ENCODE measurements at regions of chr15 and their contacts with region 1.

Region 1: GRCh38 chr15:60548101-60548500 is 69.2 kb upstream of the ICE2 start:
- DNase-seq: peak in 1 of 2 donors; percentile 68
- ATAC-seq: peak; percentile 11 to 40 (median 33)
- H3K4me3 ChIP-seq: no peak overlapping the region
- H3K4me3 Mint-ChIP-seq: peak overlapping the region; percentile 88
- H3K27ac ChIP-seq: peak overlapping the region; percentile 87
- H3K27ac Mint-ChIP-seq: peak overlapping the region; percentile 93 to 95
- H3K4me1 ChIP-seq: peaks cover 61% of the 10 kb centered on the region
- H3K4me1 Mint-ChIP-seq: peaks cover 95% of the 10 kb centered on the region in 2 donors
- H3K27me3 ChIP-seq: no peaks in the 10 kb centered on the region
- H3K27me3 Mint-ChIP-seq: no peaks in the 10 kb centered on the region
- CTCF ChIP-seq: no peak

Region 2: DNA sequence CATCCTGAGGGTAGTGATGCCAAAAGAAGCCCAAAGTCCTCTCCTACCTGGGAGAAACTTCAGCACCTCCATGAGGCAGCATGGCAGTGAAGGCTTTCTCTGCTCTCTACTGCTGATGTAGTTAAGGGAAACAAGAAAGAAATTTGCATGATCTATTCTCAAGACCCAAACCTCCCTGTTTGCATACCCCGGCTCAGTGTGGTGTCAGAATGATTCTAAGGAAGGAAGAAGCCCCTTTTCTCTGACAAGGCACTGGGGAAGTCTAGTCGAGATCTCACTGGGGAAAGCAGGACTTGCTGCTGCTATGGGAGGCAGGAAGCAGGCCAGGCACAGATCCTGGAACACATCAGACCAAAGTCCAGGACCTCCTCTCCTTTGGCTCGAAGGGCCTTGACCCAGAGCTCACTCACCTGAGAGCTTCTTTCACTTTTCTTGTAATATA is 20.2 kb after region 1 on chr15:
- intact Hi-C with region 1: loop called (anchors 2 kb)
- DNase-seq: peak in 1 of 2 donors; percentile 41
- ATAC-seq: peak in 2 of 3 donors; percentile 6 to 8
- H3K4me3 ChIP-seq: no peak overlapping the region
- H3K4me3 Mint-ChIP-seq: peak overlapping the region; percentile 77
- H3K27ac ChIP-seq: peak overlapping the region; percentile 65
- H3K27ac Mint-ChIP-seq: peak overlapping the region; percentile 78 to 88
- H3K4me1 ChIP-seq: peaks cover 63% of the 10 kb centered on the region
- H3K4me1 Mint-ChIP-seq: peaks cover 91 to 92% of the 10 kb centered on the region in 2 donors
- H3K27me3 ChIP-seq: no peaks in the 10 kb centered on the region
- H3K27me3 Mint-ChIP-seq: no peaks in the 10 kb centered on the region
- CTCF ChIP-seq: no peak

Region 3: DNA sequence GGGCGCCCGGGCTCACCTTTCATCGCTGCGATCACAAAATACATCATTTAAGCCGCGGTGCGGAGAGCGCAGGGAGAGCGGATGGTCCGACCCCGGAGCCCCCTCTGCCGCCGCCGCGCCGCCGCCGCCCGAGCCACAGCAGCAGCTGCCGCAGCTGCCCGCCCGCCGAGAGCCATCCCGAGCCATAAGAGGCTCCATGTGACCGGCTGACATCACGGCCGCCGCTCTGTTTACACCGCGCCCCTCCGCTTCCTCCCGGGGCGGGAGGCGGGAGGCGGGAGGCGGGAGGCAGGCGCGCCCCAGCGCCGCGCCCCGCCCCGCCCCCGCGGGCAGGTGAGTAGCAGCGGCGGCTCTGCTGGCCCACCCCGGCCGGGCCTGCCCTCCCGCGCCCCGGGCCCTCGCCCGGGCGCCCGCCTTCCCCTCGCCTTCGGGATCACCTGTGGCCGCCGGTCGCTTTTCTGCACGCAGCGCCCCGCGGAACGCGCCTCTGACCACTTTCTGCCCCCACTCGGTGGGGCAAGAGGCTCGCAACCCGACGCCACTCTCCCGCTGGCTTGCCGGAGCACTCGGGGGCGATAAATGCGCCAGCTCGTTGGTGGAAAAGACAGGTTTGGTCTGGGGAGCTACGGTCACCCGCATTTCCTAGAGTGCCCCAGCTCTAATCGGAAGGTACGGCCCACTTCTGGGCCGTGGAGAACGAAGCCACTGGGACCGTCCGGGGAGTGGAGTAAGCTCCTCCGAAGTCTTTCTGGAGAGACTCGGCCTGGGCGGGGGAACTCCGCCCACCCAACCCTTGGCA is 44.5 kb after region 1 on chr15:
- intact Hi-C with region 1: no loop called
- DNase-seq: peak; percentile 73 to 92
- ATAC-seq: peak; percentile 81 to 93 (median 87)
- H3K4me3 ChIP-seq: peak overlapping the region; percentile 90
- H3K4me3 Mint-ChIP-seq: peak overlapping the region; percentile 91
- H3K27ac ChIP-seq: peak overlapping the region; percentile 86
- H3K27ac Mint-ChIP-seq: peak overlapping the region; percentile 93
- H3K4me1 ChIP-seq: peaks cover 13% of the 10 kb centered on the region
- H3K4me1 Mint-ChIP-seq: peaks cover 39 to 52% of the 10 kb centered on the region in 2 donors
- H3K27me3 ChIP-seq: no peaks in the 10 kb centered on the region
- H3K27me3 Mint-ChIP-seq: no peaks in the 10 kb centered on the region
- CTCF ChIP-seq: no peak

Region 4: DNA sequence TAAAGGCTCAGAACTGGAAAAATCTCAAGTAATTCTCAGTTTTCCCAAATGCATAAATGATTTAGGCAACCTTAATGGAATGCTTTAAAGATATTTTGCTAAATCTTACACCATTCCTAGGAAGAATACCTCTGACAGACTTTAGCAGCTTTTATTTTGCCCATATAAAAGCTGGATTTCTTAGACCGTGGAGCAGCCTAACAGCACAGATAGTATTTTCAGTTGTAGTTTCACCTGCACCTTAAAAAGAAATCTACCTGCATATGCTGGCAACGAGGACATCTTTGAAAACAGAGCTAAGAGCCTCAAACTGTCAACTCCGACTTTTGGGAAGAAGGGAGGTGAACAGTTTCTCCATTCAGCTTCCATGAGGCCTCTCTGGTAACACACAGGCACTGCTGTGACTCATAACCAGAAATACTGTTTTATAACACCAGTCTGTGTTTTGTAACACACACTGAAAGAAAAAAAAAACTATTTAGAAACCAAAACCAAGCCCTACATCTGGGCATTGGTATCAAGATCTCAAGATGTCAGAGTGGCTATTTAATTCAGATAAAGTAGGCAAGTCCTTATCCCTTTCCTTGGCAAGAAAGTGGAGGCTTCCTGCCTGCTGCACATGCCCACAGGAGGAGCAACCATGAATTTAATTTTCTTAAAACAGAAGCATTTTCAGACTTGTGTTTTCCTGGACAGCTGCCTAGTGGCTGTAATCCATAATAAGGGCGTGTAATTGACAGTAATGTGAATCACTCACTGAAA is 112.4 kb after region 1 on chr15:
- intact Hi-C with region 1: loop called (anchors 10 kb)
- DNase-seq: peak in 1 of 2 donors; percentile 16
- ATAC-seq: peak; percentile 70 to 89 (median 88)
- H3K4me3 ChIP-seq: no peak overlapping the region
- H3K4me3 Mint-ChIP-seq: no peak overlapping the region
- H3K27ac ChIP-seq: no peak overlapping the region
- H3K27ac Mint-ChIP-seq: peak overlapping the region; percentile 10 to 53
- H3K4me1 ChIP-seq: peaks cover 6% of the 10 kb centered on the region
- H3K4me1 Mint-ChIP-seq: peaks cover 16 to 24% of the 10 kb centered on the region in 2 donors
- H3K27me3 ChIP-seq: no peaks in the 10 kb centered on the region
- H3K27me3 Mint-ChIP-seq: no peaks in the 10 kb centered on the region
- CTCF ChIP-seq: no peak